ENCODE measurements at regions of chrX and their contacts with region 1.

Region 1: GRCh38 chrX:101759000-101759399 is 99.3 kb upstream of the ARMCX2 start:
- DNase-seq: peak; percentile 60
- H3K4me3 ChIP-seq: no peak overlapping the region
- H3K27ac ChIP-seq: no peak overlapping the region
- H3K4me1 ChIP-seq: no peaks in the 10 kb centered on the region
- H3K27me3 ChIP-seq: no peaks in the 10 kb centered on the region

Region 2: DNA sequence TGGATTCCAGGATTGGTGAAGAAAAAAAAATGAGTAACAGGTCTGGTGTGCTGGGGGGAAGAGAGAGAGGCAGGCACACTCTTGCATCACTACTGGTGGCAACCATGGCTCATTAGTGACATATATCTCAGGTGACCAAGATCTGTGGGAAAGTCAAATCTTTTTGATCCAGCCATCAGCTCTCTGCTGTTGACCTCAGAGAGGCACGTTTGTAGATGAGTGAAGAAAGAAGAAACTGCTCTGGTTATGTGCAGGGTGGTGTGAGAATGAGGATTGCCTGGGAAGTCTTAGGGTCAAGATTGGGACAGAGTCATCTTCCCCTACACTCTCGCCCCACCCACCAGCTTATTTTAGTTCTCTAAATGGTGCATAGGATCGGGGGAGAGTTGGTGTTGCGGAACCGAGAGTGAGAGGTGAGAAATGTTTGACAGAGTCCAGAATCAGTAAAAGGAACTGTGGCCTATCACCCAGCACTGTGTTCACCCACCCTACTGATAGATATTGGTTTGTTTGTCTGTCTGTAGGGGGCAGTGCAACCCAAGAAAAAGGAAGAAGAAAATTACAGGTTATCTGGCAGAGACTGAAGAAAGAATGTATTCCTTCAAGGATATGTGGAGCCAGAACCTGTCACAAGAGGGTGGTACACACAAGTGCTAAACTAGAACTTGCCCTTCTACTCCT is 163.1 kb before region 1 on chrX:
- in situ Hi-C with region 1: loop called (anchors 25 kb)
- DNase-seq: peak; percentile 70
- H3K4me3 ChIP-seq: no peak overlapping the region
- H3K27ac ChIP-seq: no peak overlapping the region
- H3K4me1 ChIP-seq: no peaks in the 10 kb centered on the region
- H3K27me3 ChIP-seq: no peaks in the 10 kb centered on the region

Measured in GM23248 (cell line).